Heart left ventricle (tissue), 16 donors: ENCODE measurements at regions of chr1 and their contacts with region 1.

Region 1: GRCh38 chr1:2233997-2234761 is 6.1 kb downstream of the SKI start:
- DNase-seq: peak; percentile 71 to 95 (median 94)
- ATAC-seq: peak; percentile 23 to 84 (median 58)
- H3K4me3 ChIP-seq: peak overlapping the region in 10 of 12 donors; percentile 29 to 89 (median 72)
- H3K27ac ChIP-seq: peak overlapping the region; percentile 51 to 89 (median 70)
- H3K4me1 ChIP-seq: peaks cover 24 to 100% (median 89%) of the 10 kb centered on the region in 12 donors
- H3K27me3 ChIP-seq: no peaks in the 10 kb centered on the region
- CTCF ChIP-seq: no peak
- POLR2A ChIP-seq: peak in 1 of 2 donors; percentile 21

Region 2: DNA sequence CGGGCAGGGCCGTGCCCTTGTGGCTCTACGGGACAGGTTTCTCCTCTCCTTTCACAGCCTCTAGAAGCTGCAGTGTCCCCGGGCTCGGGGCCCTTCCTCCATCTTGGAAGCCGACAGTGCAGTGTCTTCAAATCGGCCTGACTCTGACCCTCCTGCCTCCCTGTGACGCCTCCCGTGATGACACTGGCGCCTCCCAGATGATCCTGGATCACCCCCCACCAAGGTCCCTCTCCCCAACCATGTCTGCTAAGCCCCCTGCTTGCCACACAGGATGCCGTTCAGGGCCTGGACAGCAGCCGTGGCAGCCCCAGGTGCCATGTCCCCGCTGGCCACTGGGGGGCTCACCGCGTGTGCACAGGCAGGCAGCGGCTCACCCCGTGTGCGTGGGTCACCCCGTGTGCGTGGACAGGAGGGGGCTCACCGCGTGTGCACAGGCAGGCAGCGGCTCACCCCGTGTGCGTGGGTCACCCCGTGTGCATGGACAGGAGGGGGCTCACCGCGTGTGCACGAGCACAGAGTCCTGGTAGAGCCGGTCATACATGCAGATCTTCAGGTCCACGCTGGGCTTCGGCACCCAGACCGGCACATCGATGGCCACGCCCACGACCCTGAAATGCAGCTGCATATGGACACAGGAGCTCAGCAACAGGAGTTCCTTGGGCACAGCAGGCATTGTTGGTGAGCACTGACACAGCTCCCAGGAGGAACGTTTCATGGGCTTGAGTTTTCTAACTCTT is 290.2 kb before region 1 on chr1:
- intact Hi-C with region 1: no loop called
- DNase-seq: peak in 3 of 5 donors; percentile 45 to 78 (median 49)
- ATAC-seq: peak; percentile 56 to 87 (median 79)
- H3K4me3 ChIP-seq: peak overlapping the region in 1 of 12 donors; percentile 29
- H3K27ac ChIP-seq: no peak overlapping the region
- H3K4me1 ChIP-seq: peaks cover 0 to 17% (median 5%) of the 10 kb centered on the region in 12 donors
- H3K27me3 ChIP-seq: peaks cover 0 to 17% (median 0%) of the 10 kb centered on the region in 9 donors
- CTCF ChIP-seq: peak; percentile 75 to 92 (median 84)
- POLR2A ChIP-seq: no peak

Region 3: DNA sequence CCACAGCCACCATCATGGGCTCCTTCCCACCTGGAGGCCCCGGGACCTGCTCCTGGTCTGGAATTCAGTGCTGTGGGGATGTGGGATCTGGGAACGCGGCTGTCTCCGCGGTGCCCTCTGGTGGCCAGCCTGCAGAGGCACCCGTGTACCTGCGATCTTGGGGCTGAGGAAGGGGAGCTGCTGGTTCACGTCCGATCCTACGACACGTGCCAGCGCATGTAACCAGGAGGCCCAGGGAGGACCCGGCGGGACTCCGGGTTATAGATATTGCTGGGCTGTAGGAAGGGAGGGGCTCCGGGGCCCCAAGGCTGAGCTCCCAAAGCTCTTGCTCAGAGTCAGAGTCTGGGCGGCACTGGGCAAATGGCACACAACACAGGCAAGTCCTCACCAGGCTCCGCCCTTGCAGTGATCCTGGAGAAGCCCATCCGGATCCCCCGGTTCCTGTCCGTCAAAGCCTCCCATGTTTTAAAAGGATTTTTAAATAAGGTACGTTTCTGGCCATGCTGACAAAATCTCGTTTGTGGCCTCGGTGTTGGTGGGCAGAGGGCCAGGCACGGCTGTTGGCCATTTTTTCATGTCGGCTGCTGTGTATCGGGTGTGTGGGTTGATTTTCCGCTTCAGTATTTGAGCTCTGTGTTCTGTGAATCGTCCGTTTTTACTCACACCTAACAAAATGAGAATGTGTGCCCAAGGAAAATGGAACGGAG is 59.7 kb before region 1 on chr1:
- intact Hi-C with region 1: no loop called
- DNase-seq: peak; percentile 58 to 80 (median 61)
- ATAC-seq: peak; percentile 33 to 88 (median 70)
- H3K4me3 ChIP-seq: peak overlapping the region; percentile 7 to 63 (median 44)
- H3K27ac ChIP-seq: peak overlapping the region in 3 of 12 donors; percentile 12 to 60 (median 28)
- H3K4me1 ChIP-seq: peaks cover 0 to 10% (median 4%) of the 10 kb centered on the region in 12 donors
- H3K27me3 ChIP-seq: no peaks in the 10 kb centered on the region
- CTCF ChIP-seq: peak; percentile 82 to 97 (median 88)
- POLR2A ChIP-seq: no peak

Region 4: DNA sequence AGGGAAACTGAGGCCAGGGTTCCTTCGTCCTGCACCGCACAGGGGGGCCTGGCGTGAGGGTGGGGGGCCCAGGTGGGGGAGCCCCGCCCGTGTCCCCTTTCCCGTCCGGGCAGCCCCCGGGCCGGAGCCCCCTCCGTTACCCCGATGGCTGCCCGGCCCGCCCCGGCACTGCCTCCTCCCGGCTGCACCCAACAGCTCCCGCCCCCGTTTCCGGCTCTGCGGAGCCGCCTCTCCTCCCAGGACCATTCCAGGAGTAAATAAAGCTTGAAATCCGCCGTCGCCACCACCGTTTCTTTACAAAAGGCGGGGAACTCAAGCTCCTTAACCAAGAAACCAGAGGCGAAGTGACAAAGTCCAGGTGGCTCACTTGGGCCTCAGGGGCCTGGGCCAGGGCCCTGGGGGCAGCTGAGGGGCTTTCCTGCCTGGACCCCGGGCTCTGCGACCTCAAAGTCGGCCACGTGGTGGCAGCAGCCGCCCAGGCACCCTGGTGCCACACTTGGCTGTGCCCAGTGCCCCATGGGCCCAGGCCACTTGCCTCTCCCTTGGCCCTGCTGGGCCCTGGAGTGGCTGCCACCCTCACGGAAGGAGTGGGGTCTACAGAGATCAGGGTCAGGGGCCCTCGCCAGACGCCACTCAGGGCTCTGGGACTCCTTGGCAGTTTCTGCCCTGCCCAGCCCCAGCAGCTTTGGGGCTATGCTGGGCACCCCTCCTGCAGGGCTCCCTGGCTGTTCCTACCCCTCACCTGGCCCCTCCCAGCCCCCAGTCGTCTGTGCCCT is 39.1 kb before region 1 on chr1:
- intact Hi-C with region 1: loop called in 5 of 10 experiments (anchors 5 kb)
- DNase-seq: peak; percentile 92 to 95 (median 94)
- ATAC-seq: peak; percentile 62 to 79 (median 76)
- H3K4me3 ChIP-seq: peak overlapping the region; percentile 51 to 88 (median 73)
- H3K27ac ChIP-seq: peak overlapping the region; percentile 82 to 98 (median 95)
- H3K4me1 ChIP-seq: peaks cover 6 to 67% (median 54%) of the 10 kb centered on the region in 12 donors
- H3K27me3 ChIP-seq: no peaks in the 10 kb centered on the region
- CTCF ChIP-seq: peak; percentile 85 to 98 (median 96)
- POLR2A ChIP-seq: peak in 1 of 2 donors; percentile 31

Region 5: DNA sequence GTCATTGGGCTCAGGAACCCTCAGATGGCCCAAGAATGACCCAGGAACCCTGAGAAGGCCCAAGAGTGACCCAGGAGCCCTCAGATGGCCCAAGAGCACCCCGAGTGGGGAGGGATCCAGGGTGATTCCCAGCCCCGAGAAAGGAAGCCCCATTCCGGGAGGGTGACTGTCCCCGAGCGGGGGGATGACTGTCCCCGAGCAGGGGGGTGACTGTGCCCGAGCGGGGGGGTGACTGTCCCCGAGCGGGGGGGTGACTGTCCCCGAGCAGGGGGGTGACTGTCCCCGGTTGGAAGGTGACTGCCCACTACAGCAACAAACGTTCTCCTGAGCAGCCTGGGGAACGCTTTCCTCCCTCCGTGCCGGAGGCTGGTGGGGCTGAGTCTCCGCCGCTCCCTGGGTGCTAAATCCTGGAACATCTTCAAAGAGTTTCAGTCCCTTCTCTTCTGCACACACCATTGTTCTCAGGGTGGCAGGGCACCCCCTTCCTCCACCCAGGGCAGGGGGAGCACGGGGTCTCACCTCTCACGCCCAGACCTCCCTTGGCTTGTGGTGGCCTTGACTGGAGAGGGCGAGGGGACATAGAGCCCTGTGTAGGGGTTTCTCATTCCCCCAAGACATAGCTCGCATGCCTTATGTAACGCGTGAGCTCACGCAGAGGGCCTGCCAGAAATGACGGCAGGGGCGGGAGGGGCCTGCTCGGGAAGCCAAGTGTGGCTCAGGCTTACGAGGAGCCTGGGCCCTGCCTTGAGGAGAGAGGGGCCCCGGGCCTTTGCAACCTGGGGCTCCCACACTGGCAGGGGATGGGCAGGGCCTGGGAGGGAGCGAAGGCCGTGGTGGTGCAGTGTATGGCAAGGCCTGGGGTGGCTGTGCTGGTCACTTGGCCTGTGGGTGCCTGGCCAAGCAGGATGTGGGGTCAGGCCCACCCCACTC is 20.3 kb before region 1 on chr1:
- intact Hi-C with region 1: no loop called
- DNase-seq: peak; percentile 90 to 92 (median 90)
- ATAC-seq: peak; percentile 53 to 77 (median 66)
- H3K4me3 ChIP-seq: peak overlapping the region in 10 of 12 donors; percentile 16 to 56 (median 43)
- H3K27ac ChIP-seq: peak overlapping the region; percentile 92 to 100 (median 98)
- H3K4me1 ChIP-seq: peaks cover 16 to 51% (median 42%) of the 10 kb centered on the region in 12 donors
- H3K27me3 ChIP-seq: no peaks in the 10 kb centered on the region
- CTCF ChIP-seq: no peak
- POLR2A ChIP-seq: no peak

Region 6: DNA sequence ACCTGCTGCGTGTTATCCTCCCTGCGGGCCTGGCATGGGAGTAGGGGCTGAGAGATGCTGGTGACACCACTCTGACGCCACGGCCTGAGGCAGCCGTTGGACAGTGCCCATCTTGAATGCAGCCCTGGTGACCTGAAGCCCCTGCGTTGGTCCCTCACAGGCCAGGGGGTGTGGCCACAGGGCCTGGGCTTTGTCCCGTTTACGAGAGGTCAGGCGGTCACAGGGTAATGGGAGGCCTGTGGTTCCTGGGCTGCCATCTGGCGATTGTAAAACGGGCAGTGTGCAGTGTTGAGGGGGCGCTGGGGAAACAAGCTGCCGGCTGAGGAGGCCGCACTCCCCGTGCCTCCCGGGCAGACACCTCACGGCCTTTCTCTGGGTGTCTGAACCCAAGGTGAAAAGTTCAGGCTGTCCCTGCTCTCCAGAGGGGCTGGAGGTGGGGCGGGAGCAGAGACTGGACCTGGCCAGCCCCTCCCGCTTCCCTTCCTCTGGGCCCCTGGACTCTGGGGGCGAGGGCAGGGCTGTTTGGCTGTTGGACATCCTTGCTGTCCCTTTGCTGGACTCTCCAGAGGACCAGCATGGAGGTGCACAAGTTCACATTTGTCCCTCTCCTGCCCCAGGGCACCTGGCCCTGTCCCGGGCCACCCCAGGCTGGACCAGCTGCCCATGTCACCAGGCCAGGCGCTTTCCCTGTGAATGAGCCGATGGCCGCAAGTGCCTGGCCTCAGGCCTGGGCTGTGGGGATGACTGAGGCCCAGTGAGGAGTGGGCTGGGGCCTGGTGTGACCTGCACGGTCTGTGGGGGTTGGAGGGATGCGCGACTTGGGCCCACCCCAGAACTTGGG is 36.3 kb after region 1 on chr1:
- intact Hi-C with region 1: loop called in 4 of 10 experiments (anchors 5 kb)
- DNase-seq: peak in 1 of 5 donors; percentile 62
- ATAC-seq: peak in 3 of 4 donors; percentile 2 to 12 (median 4)
- H3K4me3 ChIP-seq: peak overlapping the region in 2 of 12 donors; percentile 2 to 7
- H3K27ac ChIP-seq: peak overlapping the region in 10 of 12 donors; percentile 4 to 77 (median 44)
- H3K4me1 ChIP-seq: peaks cover 30 to 100% (median 93%) of the 10 kb centered on the region in 12 donors
- H3K27me3 ChIP-seq: no peaks in the 10 kb centered on the region
- CTCF ChIP-seq: no peak
- POLR2A ChIP-seq: no peak

Region 7: DNA sequence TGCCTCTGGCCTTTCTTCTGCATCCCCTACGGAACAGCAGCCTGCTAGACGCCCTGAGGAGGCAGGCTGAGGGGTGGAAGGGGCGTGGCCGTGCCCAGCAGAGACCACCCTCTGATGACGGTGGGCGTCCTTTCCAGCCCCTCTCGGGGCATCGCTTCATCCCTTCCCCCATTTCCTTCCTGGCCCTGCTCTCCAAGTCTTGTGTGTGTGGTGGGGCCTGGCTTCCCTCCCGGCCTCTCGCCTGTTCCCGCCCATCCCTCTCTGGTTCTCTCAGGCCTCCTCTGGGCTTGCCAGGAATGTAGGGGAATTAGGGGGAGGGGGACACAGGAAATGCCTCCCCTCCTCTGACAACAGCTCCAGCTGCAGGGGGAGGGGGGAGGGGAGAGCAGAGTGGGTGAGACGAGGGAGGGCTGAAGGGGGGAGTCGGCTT is 45.0 kb after region 1 on chr1:
- intact Hi-C with region 1: loop called in 4 of 10 experiments (anchors 5 kb)
- DNase-seq: peak; percentile 73 to 88 (median 79)
- ATAC-seq: peak; percentile 49 to 87 (median 60)
- H3K4me3 ChIP-seq: peak overlapping the region in 2 of 12 donors; percentile 3 to 8
- H3K27ac ChIP-seq: peak overlapping the region in 11 of 12 donors; percentile 0 to 82 (median 72)
- H3K4me1 ChIP-seq: peaks cover 26 to 77% (median 63%) of the 10 kb centered on the region in 12 donors
- H3K27me3 ChIP-seq: no peaks in the 10 kb centered on the region
- CTCF ChIP-seq: no peak
- POLR2A ChIP-seq: no peak

Region 8: GRCh38 chr1:2290595-2291510 is 56.7 kb after region 1 on chr1:
- intact Hi-C with region 1: loop called in 1 of 10 experiments (anchors 5 kb)
- DNase-seq: peak; percentile 82 to 89 (median 88)
- ATAC-seq: peak; percentile 61 to 81 (median 77)
- H3K4me3 ChIP-seq: peak overlapping the region in 9 of 12 donors; percentile 18 to 53 (median 36)
- H3K27ac ChIP-seq: peak overlapping the region; percentile 56 to 97 (median 75)
- H3K4me1 ChIP-seq: peaks cover 14 to 92% (median 77%) of the 10 kb centered on the region in 12 donors
- H3K27me3 ChIP-seq: no peaks in the 10 kb centered on the region
- CTCF ChIP-seq: no peak
- POLR2A ChIP-seq: no peak

Region 9: GRCh38 chr1:2300851-2301606 is 66.8 kb after region 1 on chr1:
- intact Hi-C with region 1: loop called in 2 of 10 experiments (anchors 5 kb)
- DNase-seq: peak; percentile 87 to 94 (median 90)
- ATAC-seq: peak; percentile 55 to 76 (median 62)
- H3K4me3 ChIP-seq: peak overlapping the region in 11 of 12 donors; percentile 21 to 59 (median 37)
- H3K27ac ChIP-seq: peak overlapping the region; percentile 74 to 99 (median 89)
- H3K4me1 ChIP-seq: peaks cover 23 to 78% (median 46%) of the 10 kb centered on the region in 12 donors
- H3K27me3 ChIP-seq: no peaks in the 10 kb centered on the region
- CTCF ChIP-seq: no peak
- POLR2A ChIP-seq: no peak